ENCODE measurements at regions of chr2 and their contacts with region 1.

Region 1: DNA sequence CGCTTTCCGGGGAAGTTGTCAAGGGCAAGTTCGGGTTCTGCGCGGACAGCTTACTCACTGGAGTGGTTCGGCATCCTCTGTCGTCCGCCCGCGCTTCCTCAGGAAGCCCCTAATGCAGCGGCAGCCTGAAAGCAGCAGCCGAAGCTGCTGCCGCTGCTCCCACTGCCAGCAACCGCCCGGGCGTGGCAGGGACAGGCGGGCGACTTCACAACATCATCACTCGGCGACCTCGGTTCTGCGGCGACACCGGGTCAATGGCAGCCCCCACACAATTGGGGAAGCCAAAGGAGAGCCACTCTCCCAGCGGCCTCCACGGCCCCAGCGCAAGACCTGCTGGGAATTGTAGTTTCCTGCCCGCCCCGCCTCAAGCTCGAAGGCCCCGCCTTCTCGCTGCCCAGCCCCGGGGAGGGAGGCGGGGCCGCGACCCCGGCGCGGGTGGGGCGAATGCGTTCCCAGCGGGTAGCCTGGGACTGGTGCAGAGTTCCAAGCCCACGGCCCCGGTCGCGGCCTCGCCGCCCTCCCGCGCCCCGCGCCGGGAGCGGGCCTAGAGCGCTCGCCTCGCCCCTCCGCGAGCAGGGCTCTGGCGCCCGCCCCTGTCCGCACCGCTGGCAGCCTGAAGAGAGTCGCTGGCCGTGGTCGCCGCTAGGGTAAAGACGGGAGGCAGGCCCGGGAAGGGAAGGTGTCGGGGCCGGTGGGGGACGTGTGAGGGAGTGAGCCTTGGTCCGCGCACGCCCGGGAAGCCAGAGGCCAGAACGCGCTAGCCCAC is at the starts of genes STRADB and TRAK2:
- DNase-seq: peak; percentile 95
- ATAC-seq: peak; percentile 88
- H3K4me3 ChIP-seq: peak within 1 kb of the TSS; percentile 88
- H3K27ac ChIP-seq: peak within 1 kb of the TSS; percentile 21
- H3K4me1 ChIP-seq: peaks cover 23% of the 10 kb centered on the region
- H3K27me3 ChIP-seq: no peaks in the 10 kb centered on the region
- CTCF ChIP-seq: 0 out of 2 replicates have a peak, but pooled peaks have one; percentile 16
- total RNA-seq, gene STRADB: 27.8 and 28.9 TPM in 2 replicates
- total RNA-seq, gene TRAK2: 9.4 and 10.1 TPM in 2 replicates

Region 2: GRCh38 chr2:201432038-201432620 is 19.3 kb before region 1 on chr2:
- CTCF ChIA-PET with region 1: no interaction called
- POLR2A ChIA-PET with region 1: interaction called, 14 read pairs
- intact Hi-C with region 1: no loop called
- DNase-seq: peak; percentile 74
- ATAC-seq: peak; percentile 99
- H3K4me3 ChIP-seq: 0 out of 2 replicates have a peak overlapping the region, but pooled peaks have one; percentile 2
- H3K27ac ChIP-seq: peak overlapping the region; percentile 78
- H3K4me1 ChIP-seq: peaks cover 17% of the 10 kb centered on the region
- H3K27me3 ChIP-seq: no peaks in the 10 kb centered on the region
- CTCF ChIP-seq: no peak

Region 3: DNA sequence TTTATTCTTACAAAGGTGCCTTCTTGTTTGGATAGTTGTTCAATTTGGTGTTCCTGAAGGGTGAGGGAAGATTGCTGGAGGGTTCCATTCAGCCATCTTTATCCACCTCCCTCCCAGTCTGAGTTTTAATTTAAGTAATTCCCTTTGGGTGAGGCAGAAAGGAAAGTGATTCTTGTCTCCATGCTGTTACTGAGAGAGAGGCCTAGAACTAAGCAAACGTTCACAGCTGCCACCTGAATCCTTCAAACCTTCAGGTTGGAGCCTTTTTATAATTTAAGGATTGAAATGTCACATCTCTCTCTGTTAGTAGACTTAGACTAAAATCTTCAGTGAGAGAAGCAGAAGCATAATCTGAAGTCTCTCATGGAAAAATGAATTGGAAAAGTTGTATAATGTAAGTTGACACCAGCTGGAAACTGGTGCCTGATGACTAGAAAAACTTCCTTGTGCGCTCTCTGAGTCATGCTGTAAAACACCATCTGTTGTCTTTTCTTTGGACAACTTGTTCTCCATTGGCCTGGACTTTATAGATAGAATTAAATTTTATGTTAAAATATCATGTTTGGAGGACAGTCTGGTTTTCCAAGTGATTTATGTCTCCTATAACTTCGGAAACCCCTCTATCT is 14.7 kb after region 1 on chr2:
- CTCF ChIA-PET with region 1: no interaction called
- POLR2A ChIA-PET with region 1: interaction called, 4 read pairs
- intact Hi-C with region 1: loop called (anchors 1 kb)
- DNase-seq: peak; percentile 80
- ATAC-seq: peak; percentile 85
- H3K4me3 ChIP-seq: peak overlapping the region; percentile 45
- H3K27ac ChIP-seq: peak overlapping the region; percentile 85
- H3K4me1 ChIP-seq: peaks cover 46% of the 10 kb centered on the region
- H3K27me3 ChIP-seq: no peaks in the 10 kb centered on the region
- CTCF ChIP-seq: no peak

Region 4: GRCh38 chr2:201780674-201781581 is 329.5 kb after region 1 on chr2 and contains the start of gene ALS2:
- CTCF ChIA-PET with region 1: no interaction called
- POLR2A ChIA-PET with region 1: interaction called, 14 read pairs
- intact Hi-C with region 1: no loop called
- DNase-seq: peak; percentile 97
- ATAC-seq: peak; percentile 87
- H3K4me3 ChIP-seq: peak within 1 kb of the TSS; percentile 97
- H3K27ac ChIP-seq: peak within 1 kb of the TSS; percentile 59
- H3K4me1 ChIP-seq: peaks cover 44% of the 10 kb centered on the region
- H3K27me3 ChIP-seq: no peaks in the 10 kb centered on the region
- CTCF ChIP-seq: no peak
- total RNA-seq, gene ALS2: 20.4 and 23.8 TPM in 2 replicates

Measured in PC-3 (cell line).